Heart right ventricle (tissue), 16 donors: ENCODE measurements at regions of chr4 and their contacts with region 1.

Region 1: DNA sequence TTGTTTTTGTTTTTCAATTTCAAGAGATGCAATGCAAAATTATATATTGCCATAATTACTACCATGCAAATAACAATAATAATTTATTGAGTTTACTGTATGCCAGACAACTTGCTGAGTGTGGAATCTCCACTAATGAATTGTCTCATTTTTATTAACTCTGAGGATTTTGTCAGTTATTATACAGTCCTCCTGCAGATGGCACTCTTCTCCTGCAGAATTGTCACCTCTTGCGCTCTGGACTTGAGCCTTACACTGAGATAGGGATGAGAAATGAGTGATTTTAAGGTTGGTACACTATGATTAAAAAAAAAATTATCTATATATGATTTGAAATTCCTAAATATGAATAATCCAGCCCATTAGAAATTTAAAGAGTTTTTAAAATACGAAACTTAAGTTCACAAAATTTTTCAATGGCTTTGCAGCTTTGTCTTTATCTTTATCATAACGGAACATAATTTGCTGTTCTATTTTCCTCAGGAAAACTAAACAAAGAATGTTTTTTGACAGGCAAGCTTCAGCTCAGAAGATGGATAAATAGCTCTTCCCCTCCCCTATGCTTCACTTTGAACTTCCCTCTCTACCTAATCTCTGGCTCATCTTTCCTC is 12.7 kb upstream of the PAQR3 start:
- DNase-seq: no peak
- ATAC-seq: peak; percentile 47 to 78 (median 68)
- H3K4me3 ChIP-seq: no peak overlapping the region
- H3K27ac ChIP-seq: no peak overlapping the region
- H3K4me1 ChIP-seq: no peaks in the 10 kb centered on the region
- H3K27me3 ChIP-seq: no peaks in the 10 kb centered on the region
- CTCF ChIP-seq: peak; percentile 46 to 82 (median 71)

Region 2: GRCh38 chr4:79209822-79210635 is 258.1 kb after region 1 on chr4:
- intact Hi-C with region 1: no loop called
- DNase-seq: peak in 1 of 2 donors; percentile 5
- ATAC-seq: no peak
- H3K4me3 ChIP-seq: no peak overlapping the region
- H3K27ac ChIP-seq: no peak overlapping the region
- H3K4me1 ChIP-seq: peaks cover 0 to 9% (median 0%) of the 10 kb centered on the region in 9 donors
- H3K27me3 ChIP-seq: no peaks in the 10 kb centered on the region
- CTCF ChIP-seq: no peak

Region 3: GRCh38 chr4:79576429-79576753 is 624.4 kb after region 1 on chr4:
- intact Hi-C with region 1: loop called in 7 of 10 experiments (anchors 5 to 10 kb)
- DNase-seq: no peak
- ATAC-seq: peak; percentile 40 to 83 (median 68)
- H3K4me3 ChIP-seq: no peak overlapping the region
- H3K27ac ChIP-seq: peak overlapping the region in 1 of 10 donors; percentile 41
- H3K4me1 ChIP-seq: peaks cover 0 to 13% (median 0%) of the 10 kb centered on the region in 9 donors
- H3K27me3 ChIP-seq: no peaks in the 10 kb centered on the region
- CTCF ChIP-seq: peak; percentile 9 to 68 (median 49)

Region 4: GRCh38 chr4:79588689-79589088 is 636.7 kb after region 1 on chr4:
- intact Hi-C with region 1: loop called in 1 of 10 experiments (anchors 10 kb)
- DNase-seq: no peak
- ATAC-seq: no peak
- H3K4me3 ChIP-seq: no peak overlapping the region
- H3K27ac ChIP-seq: no peak overlapping the region
- H3K4me1 ChIP-seq: peaks cover 0 to 10% (median 4%) of the 10 kb centered on the region in 9 donors
- H3K27me3 ChIP-seq: no peaks in the 10 kb centered on the region
- CTCF ChIP-seq: no peak

Region 5: GRCh38 chr4:80202190-80202711 is 1250.3 kb after region 1 on chr4:
- intact Hi-C with region 1: loop called in 2 of 10 experiments (anchors 5 to 10 kb)
- DNase-seq: peak; percentile 81 to 90
- ATAC-seq: peak; percentile 77 to 88 (median 84)
- H3K4me3 ChIP-seq: peak overlapping the region; percentile 47 to 71 (median 58)
- H3K27ac ChIP-seq: peak overlapping the region in 5 of 10 donors; percentile 50 to 87 (median 62)
- H3K4me1 ChIP-seq: peaks cover 0 to 40% (median 20%) of the 10 kb centered on the region in 9 donors
- H3K27me3 ChIP-seq: peaks cover 6 to 78% (median 54%) of the 10 kb centered on the region in 7 donors
- CTCF ChIP-seq: peak; percentile 59 to 92 (median 89)

Region 6: GRCh38 chr4:80215449-80216052 is 1263.6 kb after region 1 on chr4:
- intact Hi-C with region 1: loop called in 8 of 10 experiments (anchors 2 to 5 kb)
- DNase-seq: no peak
- ATAC-seq: peak in 1 of 8 donors; percentile 33
- H3K4me3 ChIP-seq: no peak overlapping the region
- H3K27ac ChIP-seq: no peak overlapping the region
- H3K4me1 ChIP-seq: peaks cover 0 to 6% (median 0%) of the 10 kb centered on the region in 9 donors
- H3K27me3 ChIP-seq: peaks cover 0 to 50% (median 23%) of the 10 kb centered on the region in 7 donors
- CTCF ChIP-seq: peak; percentile 37 to 83 (median 75)

Region 7: DNA sequence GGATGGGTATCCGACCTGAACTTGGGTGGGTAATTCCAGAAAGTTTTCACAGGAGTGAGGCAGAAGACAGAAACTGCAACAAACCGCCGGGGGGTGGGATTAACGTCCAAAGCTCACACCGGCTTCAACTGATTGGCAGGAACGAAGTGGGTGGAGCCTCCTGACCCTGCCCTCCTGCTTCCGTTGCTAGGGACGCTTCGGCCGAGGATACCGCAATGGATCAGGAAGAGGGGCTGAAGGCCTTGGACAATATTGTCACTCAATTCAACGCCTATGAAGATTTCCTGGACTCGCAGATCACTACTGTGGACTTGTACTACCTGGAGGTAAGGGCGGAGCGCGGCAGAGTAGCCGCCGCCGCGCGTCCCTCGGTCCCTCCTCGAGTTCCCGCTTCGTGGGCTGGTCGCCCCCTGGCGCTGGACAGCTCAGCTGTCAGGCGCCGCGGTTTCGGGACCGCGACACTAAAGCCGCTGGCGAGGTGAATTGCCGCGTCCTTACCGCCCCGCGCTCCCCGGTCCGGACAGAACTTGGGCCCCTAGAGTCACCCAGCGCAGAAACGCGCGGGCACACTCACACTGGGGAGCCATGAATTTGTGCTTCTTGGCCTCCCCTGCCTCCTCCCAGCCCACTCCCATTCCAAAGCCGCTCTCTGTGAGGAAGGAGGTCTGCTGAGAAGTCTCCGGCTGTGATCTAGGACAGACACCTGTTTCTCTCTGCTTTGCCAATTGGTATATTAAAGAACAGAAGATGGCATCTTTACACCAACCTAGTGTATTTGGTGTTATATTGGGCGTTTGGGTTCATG is 1383.8 kb after region 1 on chr4 and contains the start of gene CFAP299:
- intact Hi-C with region 1: loop called in 4 of 10 experiments (anchors 5 to 10 kb)
- DNase-seq: peak; percentile 70 to 74
- ATAC-seq: peak; percentile 92 to 99 (median 96)
- H3K4me3 ChIP-seq: peak within 1 kb of the TSS; percentile 28 to 72 (median 58)
- H3K27ac ChIP-seq: no peak within 1 kb of the TSS
- H3K4me1 ChIP-seq: peaks cover 0 to 16% (median 6%) of the 10 kb centered on the region in 9 donors
- H3K27me3 ChIP-seq: peaks cover 0 to 46% (median 20%) of the 10 kb centered on the region in 7 donors
- CTCF ChIP-seq: peak in 7 of 9 donors; percentile 25 to 64 (median 51)
- total RNA-seq, gene CFAP299: 0.93 TPM in 1 of 10 donors, not detected in the others